MCF 10A (cell line): ENCODE measurements at regions of chr15 and their contacts with region 1.

Region 1: GRCh38 chr15:52288051-52288942 is 7.3 kb downstream of the MYO5C start:
- DNase-seq: peak; percentile 89
- H3K4me3 Mint-ChIP-seq: peak overlapping the region; percentile 56
- H3K27ac Mint-ChIP-seq: peak overlapping the region; percentile 89
- H3K4me1 Mint-ChIP-seq: peaks cover 45% of the 10 kb centered on the region
- H3K27me3 Mint-ChIP-seq: no peaks in the 10 kb centered on the region
- CTCF ChIP-seq: no peak

Region 2: DNA sequence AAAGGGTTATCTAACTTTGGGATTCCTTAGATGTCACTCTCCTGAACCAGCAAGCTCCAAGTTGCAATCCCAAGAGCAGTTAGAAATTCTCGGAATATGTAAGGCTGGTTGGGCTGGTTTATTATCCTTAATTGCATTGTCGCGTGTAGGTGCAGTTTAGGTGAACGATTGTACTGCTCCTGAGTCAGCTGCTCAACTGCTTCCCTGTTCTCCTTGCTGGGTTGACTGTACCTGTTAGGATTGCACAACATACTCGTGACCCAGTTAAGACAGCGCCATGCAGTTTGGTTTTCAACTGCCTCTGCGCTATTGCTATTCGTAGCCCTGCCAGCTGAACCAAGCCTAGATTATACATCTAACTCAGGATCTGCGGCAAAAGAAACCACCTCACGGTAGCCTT is 216.8 kb before region 1 on chr15:
- CTCF ChIA-PET with region 1: no interaction called
- POLR2A ChIA-PET with region 1: no interaction called
- intact Hi-C with region 1: no loop called
- DNase-seq: peak; percentile 87
- H3K4me3 Mint-ChIP-seq: peak overlapping the region; percentile 26
- H3K27ac Mint-ChIP-seq: peak overlapping the region; percentile 66
- H3K4me1 Mint-ChIP-seq: peaks cover 51% of the 10 kb centered on the region
- H3K27me3 Mint-ChIP-seq: no peaks in the 10 kb centered on the region
- CTCF ChIP-seq: no peak

Region 3: DNA sequence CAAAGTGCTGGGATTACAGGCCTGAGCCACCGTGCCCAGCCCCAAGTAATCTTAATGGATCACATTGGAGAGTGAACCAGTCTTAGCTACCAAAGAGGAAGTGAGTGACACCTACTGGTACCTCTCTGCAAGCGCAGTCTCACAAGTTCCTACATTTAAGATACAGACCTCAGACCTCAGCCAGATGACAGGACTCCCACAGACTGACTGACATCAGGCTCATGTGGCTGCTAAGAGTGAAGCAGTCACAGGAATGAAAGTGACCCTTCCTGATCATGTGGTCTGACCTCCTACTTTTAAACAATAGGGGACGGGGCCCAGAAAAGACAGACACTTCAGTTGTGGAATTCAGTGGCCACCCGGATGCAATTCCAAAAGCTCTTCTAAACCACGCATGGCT is 60.8 kb before region 1 on chr15:
- CTCF ChIA-PET with region 1: no interaction called
- POLR2A ChIA-PET with region 1: no interaction called
- intact Hi-C with region 1: no loop called
- DNase-seq: peak; percentile 73
- H3K4me3 Mint-ChIP-seq: no peak overlapping the region
- H3K27ac Mint-ChIP-seq: no peak overlapping the region
- H3K4me1 Mint-ChIP-seq: no peaks in the 10 kb centered on the region
- H3K27me3 Mint-ChIP-seq: no peaks in the 10 kb centered on the region
- CTCF ChIP-seq: peak; percentile 77

Region 4: GRCh38 chr15:52246686-52247431 is 41.4 kb before region 1 on chr15:
- CTCF ChIA-PET with region 1: no interaction called
- POLR2A ChIA-PET with region 1: interaction called, 13 read pairs
- intact Hi-C with region 1: no loop called
- DNase-seq: peak; percentile 95
- H3K4me3 Mint-ChIP-seq: peak overlapping the region; percentile 43
- H3K27ac Mint-ChIP-seq: peak overlapping the region; percentile 99
- H3K4me1 Mint-ChIP-seq: peaks cover 34% of the 10 kb centered on the region
- H3K27me3 Mint-ChIP-seq: no peaks in the 10 kb centered on the region
- CTCF ChIP-seq: no peak

Region 5: GRCh38 chr15:52261498-52262242 is 26.6 kb before region 1 on chr15:
- CTCF ChIA-PET with region 1: interaction called, 34 read pairs
- POLR2A ChIA-PET with region 1: interaction called, 12 read pairs
- intact Hi-C with region 1: no loop called
- DNase-seq: peak; percentile 95
- H3K4me3 Mint-ChIP-seq: peak overlapping the region; percentile 4
- H3K27ac Mint-ChIP-seq: peak overlapping the region; percentile 90
- H3K4me1 Mint-ChIP-seq: peaks cover 25% of the 10 kb centered on the region
- H3K27me3 Mint-ChIP-seq: no peaks in the 10 kb centered on the region
- CTCF ChIP-seq: peak; percentile 12

Region 6: GRCh38 chr15:52318729-52319500 is 30.6 kb after region 1 on chr15:
- CTCF ChIA-PET with region 1: interaction called, 3 read pairs
- POLR2A ChIA-PET with region 1: interaction called, 16 read pairs
- intact Hi-C with region 1: no loop called
- DNase-seq: peak; percentile 89
- H3K4me3 Mint-ChIP-seq: no peak overlapping the region
- H3K27ac Mint-ChIP-seq: peak overlapping the region; percentile 35
- H3K4me1 Mint-ChIP-seq: peaks cover 7% of the 10 kb centered on the region
- H3K27me3 Mint-ChIP-seq: no peaks in the 10 kb centered on the region
- CTCF ChIP-seq: no peak

Region 7: DNA sequence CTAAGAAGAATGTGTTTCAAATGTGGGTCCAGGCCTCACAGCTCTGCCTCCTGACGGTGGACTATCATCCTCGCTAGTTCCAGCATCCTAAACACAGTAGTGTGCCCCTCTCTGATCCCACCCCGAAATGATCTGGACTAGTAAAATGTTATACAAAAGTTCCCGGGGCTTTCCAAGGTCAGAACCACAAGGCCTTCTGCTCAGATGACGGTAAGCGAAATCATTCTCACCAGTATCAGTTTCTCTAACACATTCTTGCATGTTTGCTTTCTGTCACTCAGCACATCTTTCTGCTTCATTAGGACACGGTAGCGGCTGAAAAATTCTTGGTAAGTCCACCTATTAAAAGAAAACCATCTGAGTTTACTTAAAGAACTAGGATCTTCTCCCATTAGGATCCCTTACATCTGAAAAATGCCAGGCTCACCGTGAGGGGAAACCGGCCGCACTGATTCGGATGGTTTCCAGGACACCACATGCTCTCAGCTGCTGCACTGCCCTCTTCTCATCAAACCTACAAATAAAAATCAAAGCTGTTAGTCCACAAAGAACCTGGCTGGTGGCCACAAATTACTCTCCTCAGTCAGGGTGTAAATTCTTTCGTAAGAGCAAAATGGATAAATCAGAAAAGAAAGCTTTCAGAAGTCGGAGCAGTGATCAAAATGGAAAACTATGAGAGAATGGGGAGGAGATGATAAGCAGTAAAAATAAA is 91.3 kb after region 1 on chr15:
- CTCF ChIA-PET with region 1: no interaction called
- POLR2A ChIA-PET with region 1: no interaction called
- intact Hi-C with region 1: no loop called
- DNase-seq: no peak
- H3K4me3 Mint-ChIP-seq: no peak overlapping the region
- H3K27ac Mint-ChIP-seq: no peak overlapping the region
- H3K4me1 Mint-ChIP-seq: no peaks in the 10 kb centered on the region
- H3K27me3 Mint-ChIP-seq: no peaks in the 10 kb centered on the region
- CTCF ChIP-seq: no peak